ENCODE measurements at regions of chr10 and their contacts with region 1.

Region 1: DNA sequence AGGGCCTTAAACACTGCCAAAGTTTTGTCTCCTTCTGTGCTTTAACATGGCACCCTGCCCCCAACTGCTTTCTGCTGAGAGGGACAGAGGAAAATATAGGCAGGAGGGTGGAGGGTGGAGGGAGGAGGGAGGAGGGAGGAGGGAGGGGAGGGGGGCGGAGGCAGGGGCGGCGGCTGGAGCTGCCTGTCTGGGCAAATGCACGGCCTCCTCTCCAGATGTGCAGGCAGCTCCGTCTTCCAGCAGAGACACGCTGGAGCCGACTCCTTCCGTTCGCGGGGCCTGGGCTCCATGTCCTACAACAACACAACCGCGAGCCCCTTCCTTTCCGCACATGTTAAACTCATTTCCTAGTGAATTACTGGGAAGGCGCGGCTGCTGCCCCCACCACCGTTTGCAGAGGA is 14.2 kb downstream of the EBF3 start:
- DNase-seq: no peak
- H3K4me3 ChIP-seq: no peak overlapping the region
- CTCF ChIP-seq: no peak

Region 2: DNA sequence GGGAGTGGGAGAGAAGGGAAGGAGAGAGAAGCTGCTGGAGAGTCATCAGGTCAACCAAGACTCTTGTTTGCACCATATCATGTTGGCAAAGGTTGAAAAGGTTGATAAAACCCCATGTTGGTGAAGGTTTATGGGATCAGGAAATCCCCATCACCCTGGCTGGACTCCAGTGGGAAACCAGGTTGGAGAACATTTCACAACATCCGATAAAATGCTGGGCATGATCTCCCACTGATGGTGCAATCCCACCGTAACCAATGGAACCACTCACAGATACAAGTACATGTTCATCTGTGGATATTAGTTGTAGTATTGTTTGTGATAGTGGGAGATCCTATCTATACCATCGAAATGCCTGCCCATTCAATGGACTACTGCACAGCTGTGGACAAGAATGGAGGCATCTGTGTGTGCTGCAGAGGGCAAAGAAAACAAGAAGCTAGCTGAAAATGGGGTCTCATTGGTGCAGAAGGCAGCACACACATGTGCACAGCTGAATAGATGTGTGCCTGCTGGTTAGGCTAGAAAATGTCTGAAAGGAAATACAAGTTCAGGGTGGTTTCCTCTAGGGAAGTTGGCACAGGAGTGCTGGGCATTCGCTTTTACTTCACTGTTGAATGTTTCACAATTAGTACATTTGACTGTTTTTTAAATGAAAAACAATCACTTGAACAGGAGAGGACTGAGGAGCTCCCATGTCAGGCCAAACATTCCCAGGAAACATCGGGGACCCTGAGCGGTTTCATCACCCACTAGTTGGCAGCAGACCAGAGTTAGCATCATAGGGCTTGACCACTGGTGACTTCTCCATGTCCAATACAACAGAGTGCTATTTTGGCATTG is 563.3 kb before region 1 on chr10:
- in situ Hi-C with region 1: loop called (anchors 5 kb)
- DNase-seq: no peak
- H3K4me3 ChIP-seq: no peak overlapping the region
- CTCF ChIP-seq: no peak

Measured in astrocyte of the cerebellum (primary cell).